Activated CD4-positive, alpha-beta memory T cell treated with anti-CD3 and anti-CD28 coated beads, Interleukin-2, amount 10 ng/mL, durations not matched to agents 7 days and 5 days (primary cell): ENCODE measurements at regions of chr12 and their contacts with region 1.

Region 1: DNA sequence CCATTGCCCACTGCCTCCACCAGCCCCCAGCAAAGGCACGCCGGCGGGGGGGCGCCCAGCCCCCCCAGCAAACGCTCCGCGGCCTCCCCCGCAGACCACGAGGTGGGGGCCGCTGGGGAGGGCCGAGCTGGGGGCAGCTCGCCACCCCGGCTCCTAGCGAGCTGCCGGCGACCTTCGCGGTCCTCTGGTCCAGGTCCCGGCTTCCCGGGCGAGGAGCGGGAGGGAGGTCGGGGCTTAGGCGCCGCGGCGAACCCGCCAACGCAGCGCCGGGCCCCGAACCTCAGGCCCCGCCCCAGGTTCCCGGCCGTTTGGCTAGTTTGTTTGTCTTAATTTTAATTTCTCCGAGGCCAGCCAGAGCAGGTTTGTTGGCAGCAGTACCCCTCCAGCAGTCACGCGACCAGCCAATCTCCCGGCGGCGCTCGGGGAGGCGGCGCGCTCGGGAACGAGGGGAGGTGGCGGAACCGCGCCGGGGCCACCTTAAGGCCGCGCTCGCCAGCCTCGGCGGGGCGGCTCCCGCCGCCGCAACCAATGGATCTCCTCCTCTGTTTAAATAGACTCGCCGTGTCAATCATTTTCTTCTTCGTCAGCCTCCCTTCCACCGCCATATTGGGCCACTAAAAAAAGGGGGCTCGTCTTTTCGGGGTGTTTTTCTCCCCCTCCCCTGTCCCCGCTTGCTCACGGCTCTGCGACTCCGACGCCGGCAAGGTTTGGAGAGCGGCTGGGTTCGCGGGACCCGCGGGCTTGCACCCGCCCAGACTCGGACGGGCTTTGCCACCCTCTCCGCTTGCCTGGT is at the start of gene CDKN1B:
- DNase-seq: peak; percentile 92
- H3K4me3 Mint-ChIP-seq: peak within 1 kb of the TSS; percentile 97
- H3K27ac Mint-ChIP-seq: peak within 1 kb of the TSS; percentile 99
- H3K4me1 Mint-ChIP-seq: peaks cover 39% of the 10 kb centered on the region
- H3K27me3 Mint-ChIP-seq: no peaks in the 10 kb centered on the region
- total RNA-seq, gene CDKN1B: 164 to 166 TPM

Region 2: DNA sequence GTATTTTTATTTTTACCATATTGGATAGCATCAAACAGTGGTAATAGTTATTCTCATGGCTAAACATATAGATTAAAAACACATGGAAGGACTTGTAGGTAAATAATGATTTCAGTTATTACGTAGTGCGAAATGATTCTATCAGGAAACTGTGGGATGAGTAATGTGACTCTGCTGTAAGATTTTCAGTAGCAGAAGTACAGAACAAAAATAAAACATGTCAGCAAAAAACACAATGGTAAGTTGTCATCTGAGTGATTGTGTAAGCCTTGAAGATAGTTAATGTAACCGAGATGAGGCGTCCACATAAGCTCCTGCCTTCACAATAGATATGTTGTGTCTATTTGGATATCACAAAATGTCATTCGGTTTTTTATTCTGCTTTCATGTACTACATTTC is 260.4 kb before region 1 on chr12:
- CTCF ChIA-PET with region 1: no interaction called
- POLR2A ChIA-PET with region 1: interaction called, 13 read pairs
- DNase-seq: no peak
- H3K4me3 Mint-ChIP-seq: peak overlapping the region; percentile 46
- H3K27ac Mint-ChIP-seq: peak overlapping the region; percentile 84
- H3K4me1 Mint-ChIP-seq: peaks cover 61% of the 10 kb centered on the region
- H3K27me3 Mint-ChIP-seq: no peaks in the 10 kb centered on the region

Region 3: DNA sequence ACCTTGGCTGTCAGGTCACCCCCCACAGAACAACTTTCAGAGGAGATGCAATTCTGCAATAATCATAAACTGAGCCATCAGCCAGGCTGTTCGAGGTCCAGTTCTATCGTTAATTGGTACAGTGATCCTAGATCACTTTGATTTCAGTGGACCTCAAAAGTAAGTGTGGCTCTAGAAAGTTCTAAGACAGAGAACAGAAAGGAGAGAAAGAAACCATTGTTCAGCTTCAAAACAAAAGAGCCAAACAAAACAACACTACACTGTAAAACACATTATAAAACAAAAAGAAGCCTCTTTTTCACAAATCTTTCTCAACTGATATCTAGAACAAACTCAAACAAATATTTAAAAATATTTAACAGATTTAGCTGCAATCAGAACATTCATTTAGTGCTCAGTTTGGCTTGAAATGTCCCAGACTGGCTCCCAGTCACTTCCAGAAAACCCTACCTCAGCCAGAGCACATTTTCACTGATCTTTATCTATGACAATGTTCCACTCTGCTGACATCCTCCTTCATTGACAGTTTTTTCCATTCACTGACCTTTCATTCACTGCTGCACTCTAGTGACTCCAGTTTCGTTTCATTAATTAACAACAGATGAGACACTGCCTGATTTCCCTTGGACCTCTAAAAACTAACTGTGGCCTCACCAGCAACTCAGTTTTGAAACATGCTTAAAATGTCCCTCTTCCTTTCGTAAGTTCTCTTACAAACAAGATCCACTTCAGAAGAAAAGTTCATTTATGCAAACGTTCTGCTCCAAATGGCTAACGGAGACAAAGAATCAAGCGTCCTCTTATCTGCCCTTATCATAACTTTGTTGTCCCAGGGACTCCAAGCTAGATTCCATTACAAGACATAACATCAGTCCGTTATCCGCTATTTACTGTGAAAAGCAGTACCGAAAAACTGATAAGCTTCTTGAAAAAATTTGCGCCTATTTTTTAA is 211.2 kb before region 1 on chr12:
- CTCF ChIA-PET with region 1: no interaction called
- POLR2A ChIA-PET with region 1: interaction called, 27 read pairs
- DNase-seq: no peak
- H3K4me3 Mint-ChIP-seq: peak overlapping the region; percentile 65
- H3K27ac Mint-ChIP-seq: peak overlapping the region; percentile 81
- H3K4me1 Mint-ChIP-seq: peaks cover 76% of the 10 kb centered on the region
- H3K27me3 Mint-ChIP-seq: no peaks in the 10 kb centered on the region

Region 4: DNA sequence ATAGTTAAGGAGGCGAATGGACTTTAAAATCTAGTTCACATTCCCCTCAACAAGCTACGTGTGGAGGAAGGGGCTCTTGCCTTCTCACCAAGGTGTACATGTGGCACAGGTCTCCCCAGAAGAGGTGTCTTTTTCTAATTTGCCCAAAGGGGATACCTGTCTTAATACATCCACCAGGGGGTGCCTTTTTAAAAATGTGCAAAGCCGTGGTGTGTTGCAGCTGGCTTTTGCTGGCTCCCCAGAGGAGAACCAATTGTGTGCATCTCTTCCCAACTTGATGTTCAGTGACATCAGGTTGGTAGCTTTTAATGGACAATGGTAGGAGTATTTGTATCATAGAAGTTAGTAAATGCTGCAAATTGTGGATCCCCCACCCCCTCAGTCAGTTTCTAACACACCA is 71.5 kb before region 1 on chr12:
- CTCF ChIA-PET with region 1: no interaction called
- POLR2A ChIA-PET with region 1: interaction called, 21 read pairs
- DNase-seq: peak; percentile 35
- H3K4me3 Mint-ChIP-seq: no peak overlapping the region
- H3K27ac Mint-ChIP-seq: peak overlapping the region; percentile 55
- H3K4me1 Mint-ChIP-seq: peaks cover 12% of the 10 kb centered on the region
- H3K27me3 Mint-ChIP-seq: no peaks in the 10 kb centered on the region

Region 5: DNA sequence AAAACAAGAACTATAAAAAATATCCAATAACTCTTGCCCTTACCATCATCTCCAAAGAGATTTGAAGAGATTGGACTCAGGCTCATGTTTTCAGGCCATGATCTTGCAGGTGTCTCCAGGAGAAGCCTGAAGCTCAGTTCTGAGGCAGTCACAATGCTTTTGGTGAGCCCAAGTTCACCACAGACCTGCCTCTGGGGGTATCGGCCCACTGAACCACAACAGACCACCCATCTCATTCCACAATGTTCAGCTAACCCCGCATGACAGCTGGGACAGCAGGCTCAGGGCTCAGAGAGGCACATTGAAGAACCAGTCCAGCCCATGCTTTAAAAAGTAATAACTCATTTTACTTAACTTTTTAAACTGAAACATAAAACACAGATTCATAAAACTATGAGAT is 40.1 kb after region 1 on chr12:
- CTCF ChIA-PET with region 1: no interaction called
- POLR2A ChIA-PET with region 1: no interaction called
- DNase-seq: no peak
- H3K4me3 Mint-ChIP-seq: no peak overlapping the region
- H3K27ac Mint-ChIP-seq: no peak overlapping the region
- H3K4me1 Mint-ChIP-seq: no peaks in the 10 kb centered on the region
- H3K27me3 Mint-ChIP-seq: no peaks in the 10 kb centered on the region

Region 6: GRCh38 chr12:12786716-12787601 is 70.0 kb after region 1 on chr12:
- CTCF ChIA-PET with region 1: no interaction called
- POLR2A ChIA-PET with region 1: interaction called, 11 read pairs
- DNase-seq: peak; percentile 75
- H3K4me3 Mint-ChIP-seq: peak overlapping the region; percentile 78
- H3K27ac Mint-ChIP-seq: no peak overlapping the region
- H3K4me1 Mint-ChIP-seq: peaks cover 43% of the 10 kb centered on the region
- H3K27me3 Mint-ChIP-seq: no peaks in the 10 kb centered on the region